Thyroid gland (tissue), 4 donors: ENCODE measurements at regions of chr16 and their contacts with region 1.

Region 1: DNA sequence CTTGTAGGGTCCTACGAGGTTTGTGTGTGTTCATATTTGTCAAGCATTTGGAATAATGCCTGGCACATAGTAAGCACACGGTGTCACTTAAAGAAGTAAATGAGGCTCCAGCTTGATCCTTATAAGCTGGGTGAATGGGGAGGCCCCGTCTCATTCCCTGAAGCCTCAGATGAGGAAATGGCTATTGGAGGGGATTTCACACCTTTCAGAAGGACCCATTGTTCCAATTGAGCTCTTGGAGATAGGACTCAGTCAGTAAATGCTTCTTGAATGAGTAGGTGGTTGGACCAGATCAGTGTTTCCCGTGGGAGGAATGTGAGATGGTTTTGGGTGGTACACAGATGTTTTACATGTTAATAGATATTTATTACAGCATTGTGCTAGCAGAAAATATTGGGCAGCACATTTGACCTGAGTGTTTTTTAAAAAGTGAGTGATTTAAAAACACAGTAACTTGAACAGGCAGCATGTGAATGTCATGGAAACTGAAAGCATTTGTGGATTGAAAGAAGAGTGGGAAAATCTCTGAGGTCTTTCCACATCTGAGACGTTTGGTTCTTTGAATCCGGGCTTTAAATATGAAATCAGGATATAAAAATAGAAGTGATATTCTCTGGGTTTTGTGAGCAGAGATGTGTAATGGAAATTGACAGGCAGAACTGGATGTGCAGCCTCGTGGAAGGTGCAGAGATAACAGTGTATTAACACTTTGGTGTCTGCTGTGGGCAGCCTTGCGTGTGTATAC is 36.4 kb upstream of the ARHGAP17 start:
- DNase-seq: no peak
- H3K4me3 ChIP-seq: peak overlapping the region in 2 of 3 donors; percentile 8 to 12
- H3K27ac ChIP-seq: peak overlapping the region; percentile 4 to 64 (median 45)
- H3K4me1 ChIP-seq: peaks cover 11 to 18% of the 10 kb centered on the region in 2 donors
- H3K27me3 ChIP-seq: no peaks in the 10 kb centered on the region
- CTCF ChIP-seq: no peak
- POLR2A ChIP-seq: no peak

Region 2: DNA sequence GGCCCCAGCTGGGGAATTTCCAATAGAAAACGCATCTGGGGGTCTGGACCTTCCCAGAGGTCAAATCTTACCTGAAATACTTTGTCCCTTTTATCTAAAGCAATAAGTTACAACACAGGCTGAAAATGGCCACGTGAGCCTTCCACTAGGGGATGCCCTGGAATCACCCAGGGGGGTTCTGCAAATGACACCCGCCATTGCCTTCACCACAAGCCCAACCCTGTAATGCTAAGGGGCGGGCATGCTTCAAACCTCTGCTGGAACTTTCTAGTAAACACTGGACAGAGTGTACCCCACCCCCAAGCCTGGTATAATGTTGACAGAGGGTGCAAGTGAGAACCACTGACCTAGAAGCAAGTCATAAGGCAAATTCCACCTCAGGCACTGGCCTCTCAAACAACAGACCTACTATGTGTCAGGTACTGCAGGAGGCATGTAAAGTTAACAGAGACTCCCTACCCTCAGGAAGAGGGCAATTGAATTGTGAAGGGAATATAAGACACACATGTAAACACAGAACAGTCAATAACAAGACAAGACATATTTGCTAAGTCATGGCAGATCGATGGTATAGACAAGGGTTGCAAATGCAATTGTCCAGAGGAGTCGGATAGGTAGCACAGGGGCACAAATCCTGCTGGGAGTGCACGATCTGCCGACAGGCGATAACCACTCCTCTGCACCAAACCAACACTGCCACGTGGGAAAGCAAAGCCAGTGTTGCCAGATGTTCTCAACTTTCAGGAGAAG is 95.4 kb before region 1 on chr16:
- intact Hi-C with region 1: no loop called
- DNase-seq: no peak
- H3K4me3 ChIP-seq: no peak overlapping the region
- H3K27ac ChIP-seq: no peak overlapping the region
- H3K4me1 ChIP-seq: peaks cover 0 to 3% of the 10 kb centered on the region in 2 donors
- H3K27me3 ChIP-seq: no peaks in the 10 kb centered on the region
- CTCF ChIP-seq: no peak
- POLR2A ChIP-seq: no peak

Region 3: GRCh38 chr16:25126820-25127232 is 75.2 kb after region 1 on chr16:
- intact Hi-C with region 1: loop called (anchors 1 kb)
- DNase-seq: no peak
- H3K4me3 ChIP-seq: no peak overlapping the region
- H3K27ac ChIP-seq: no peak overlapping the region
- H3K4me1 ChIP-seq: no peaks in the 10 kb centered on the region
- H3K27me3 ChIP-seq: no peaks in the 10 kb centered on the region
- CTCF ChIP-seq: peak in 4 of 6 experiments; percentile 15 to 52 (median 41)
- POLR2A ChIP-seq: no peak

Region 4: GRCh38 chr16:25224731-25225319 is 173.2 kb after region 1 on chr16:
- intact Hi-C with region 1: loop called (anchors 5 kb)
- DNase-seq: peak in 1 of 2 donors; percentile 88
- H3K4me3 ChIP-seq: no peak overlapping the region
- H3K27ac ChIP-seq: peak overlapping the region in 1 of 3 donors; percentile 7
- H3K4me1 ChIP-seq: peaks cover 5 to 6% of the 10 kb centered on the region in 2 donors
- H3K27me3 ChIP-seq: no peaks in the 10 kb centered on the region
- CTCF ChIP-seq: no peak
- POLR2A ChIP-seq: no peak